Posterior vena cava (tissue), 2 donors: ENCODE measurements at regions of chr10 and their contacts with region 1.

Region 1: DNA sequence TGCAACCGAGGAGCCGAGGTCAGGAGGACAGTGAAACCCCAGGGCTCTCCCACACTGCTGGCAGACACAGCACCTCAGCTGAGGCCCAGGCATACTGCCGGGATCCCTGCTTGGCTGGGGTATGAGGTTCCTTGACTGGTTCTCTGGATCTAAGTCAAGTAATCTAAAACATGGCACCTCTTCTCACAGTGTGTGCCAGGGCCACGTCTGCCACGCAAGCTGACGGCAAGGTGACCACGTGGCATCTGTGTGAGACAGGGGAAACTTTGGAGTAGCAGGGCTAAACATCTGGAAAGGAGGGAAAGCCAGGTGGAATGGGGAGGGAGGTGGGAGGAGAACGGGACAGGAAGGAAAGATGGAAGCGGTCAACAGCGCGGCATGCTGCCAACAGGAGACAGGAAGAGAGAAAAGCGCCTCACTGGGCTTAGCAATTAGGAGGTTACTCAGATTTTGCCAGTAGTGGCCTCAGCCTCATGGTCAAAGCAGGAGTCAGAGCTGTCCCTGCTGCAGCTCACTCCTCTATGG is 103.7 kb downstream of the CXCL12 start:
- DNase-seq: peak; percentile 89

Region 2: GRCh38 chr10:43361986-43362839 is 918.9 kb before region 1 on chr10:
- intact Hi-C with region 1: no loop called
- DNase-seq: peak; percentile 96

Region 3: GRCh38 chr10:44245601-44245938 is 35.6 kb before region 1 on chr10:
- intact Hi-C with region 1: no loop called
- DNase-seq: no peak

Region 4: GRCh38 chr10:44293842-44294241 is 12.7 kb after region 1 on chr10:
- intact Hi-C with region 1: loop called in 1 of 2 experiments (anchors 1 kb)
- DNase-seq: no peak

Region 5: GRCh38 chr10:44325157-44325556 is 44.0 kb after region 1 on chr10:
- intact Hi-C with region 1: no loop called
- DNase-seq: no peak